ENCODE measurements at regions of chr2 and their contacts with region 1.

Region 1: DNA sequence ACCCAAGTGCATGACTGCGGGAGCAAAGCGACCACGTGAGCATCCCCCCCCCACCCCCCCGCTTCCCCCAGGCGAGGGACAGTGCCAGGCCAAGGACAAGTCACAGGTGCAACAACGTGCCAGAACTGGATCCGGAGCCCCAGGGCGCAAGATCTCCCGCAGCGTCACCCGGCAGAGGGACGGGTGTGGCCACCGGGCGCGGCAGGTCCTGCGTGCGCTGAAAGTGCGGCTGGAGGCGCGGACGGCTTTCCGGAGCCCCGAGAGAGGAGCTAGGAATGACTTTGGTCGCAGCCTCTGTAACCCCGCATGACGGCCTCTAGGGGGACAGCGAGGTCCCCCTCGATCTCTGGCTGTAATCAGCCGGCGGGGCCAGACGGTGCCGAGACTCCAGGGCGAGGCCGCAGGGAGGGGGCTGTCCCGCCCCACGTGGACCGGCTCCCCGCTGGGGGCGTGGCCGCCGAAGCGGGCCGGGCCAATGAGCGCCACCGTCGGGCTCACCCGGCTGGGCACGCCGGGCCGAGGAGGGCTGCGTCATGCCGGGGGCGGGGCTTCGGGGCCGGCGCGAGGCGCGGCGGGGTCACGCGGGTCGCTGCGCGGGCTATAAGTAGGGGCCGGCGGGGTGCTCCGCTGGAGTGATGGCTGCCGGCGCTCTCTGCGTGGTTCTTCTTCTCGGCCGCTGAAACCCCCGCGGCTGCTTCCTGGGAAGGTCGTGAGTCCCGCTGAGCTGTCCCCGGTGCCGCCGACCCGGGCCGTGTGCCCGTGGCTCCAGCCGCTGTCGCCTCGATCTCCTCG is at the start of gene SLC20A1:
- DNase-seq: peak; percentile 94
- ATAC-seq: peak; percentile 88
- H3K4me3 ChIP-seq: peak within 1 kb of the TSS; percentile 92 to 97 (median 94)
- H3K27ac ChIP-seq: peak within 1 kb of the TSS; percentile 92
- H3K4me1 ChIP-seq: peaks cover 83% of the 10 kb centered on the region
- H3K27me3 ChIP-seq: no peaks in the 10 kb centered on the region; a peak in 1 of 5 replicates
- CTCF ChIP-seq: peak; percentile 76
- EP300 ChIP-seq: peak; percentile 7 to 35; a peak in 3 of 4 replicates
- POLR2A ChIP-seq: peak; percentile 97 to 99
- RAD21 ChIP-seq: peak; percentile 86
- total RNA-seq, gene SLC20A1: 60.1 and 85.9 TPM in 2 replicates

Region 2: GRCh38 chr2:112601751-112602150 is 43.8 kb before region 1 on chr2:
- CTCF ChIA-PET with region 1: no interaction called
- POLR2A ChIA-PET with region 1: interaction called, 6 read pairs
- in situ Hi-C with region 1: no loop called
- intact Hi-C with region 1: loop called (anchors 1 kb)
- DNase-seq: no peak
- ATAC-seq: no peak
- H3K4me3 ChIP-seq: no peak overlapping the region
- H3K27ac ChIP-seq: no peak overlapping the region
- H3K4me1 ChIP-seq: peaks cover 20% of the 10 kb centered on the region
- H3K27me3 ChIP-seq: peaks cover 0 to 1% of the 10 kb centered on the region in 2 experiments; a peak in 1 of 5 replicates
- CTCF ChIP-seq: no peak
- EP300 ChIP-seq: no peak
- POLR2A ChIP-seq: no peak
- RAD21 ChIP-seq: no peak

Region 3: GRCh38 chr2:112656679-112657078 is 11.2 kb after region 1 on chr2:
- CTCF ChIA-PET with region 1: no interaction called
- POLR2A ChIA-PET with region 1: interaction called, 32 read pairs
- in situ Hi-C with region 1: no loop called
- intact Hi-C with region 1: no loop called
- DNase-seq: no peak
- ATAC-seq: no peak
- H3K4me3 ChIP-seq: no peak overlapping the region
- H3K27ac ChIP-seq: no peak overlapping the region
- H3K4me1 ChIP-seq: peaks cover 15% of the 10 kb centered on the region; the same call in 1 of the 2 replicates
- H3K27me3 ChIP-seq: no peaks in the 10 kb centered on the region
- CTCF ChIP-seq: no peak
- EP300 ChIP-seq: no peak
- POLR2A ChIP-seq: 0 out of 4 replicates have a peak, but pooled peaks of 1 of the 2 experiments have one; percentile 14
- RAD21 ChIP-seq: no peak

Region 4: GRCh38 chr2:112692496-112692911 is 47.0 kb after region 1 on chr2:
- CTCF ChIA-PET with region 1: interaction called, 3 read pairs
- POLR2A ChIA-PET with region 1: interaction called, 21 read pairs
- in situ Hi-C with region 1: no loop called
- intact Hi-C with region 1: loop called (anchors 1 kb)
- DNase-seq: peak; percentile 96
- ATAC-seq: peak; percentile 92
- H3K4me3 ChIP-seq: no peak overlapping the region
- H3K27ac ChIP-seq: no peak overlapping the region
- H3K4me1 ChIP-seq: peaks cover 52% of the 10 kb centered on the region
- H3K27me3 ChIP-seq: no peaks in the 10 kb centered on the region
- CTCF ChIP-seq: peak; percentile 33
- EP300 ChIP-seq: peak; percentile 48 to 55; a peak in 1 of 4 replicates
- POLR2A ChIP-seq: no peak
- RAD21 ChIP-seq: no peak

Region 5: DNA sequence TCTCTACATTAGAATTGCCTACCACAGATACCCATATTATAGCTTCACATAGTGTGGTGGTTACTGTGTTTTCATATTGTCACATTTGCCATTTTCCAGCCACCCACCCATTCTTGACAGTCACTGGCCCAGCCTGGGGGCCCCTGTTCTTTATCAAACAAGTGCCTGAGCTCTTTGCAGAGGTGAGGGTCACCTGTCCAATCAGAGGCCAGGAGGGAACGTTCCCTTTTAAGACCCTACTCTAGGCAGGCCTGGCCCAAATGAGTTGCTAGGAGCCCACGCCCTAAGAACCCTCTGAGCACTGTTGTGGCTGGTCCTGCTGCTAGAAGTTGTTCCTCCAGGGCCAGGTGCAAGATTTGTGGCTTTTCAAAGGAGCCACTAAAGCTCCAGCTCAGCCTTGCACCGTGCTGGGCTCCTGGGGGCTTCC is 270.7 kb after region 1 on chr2:
- CTCF ChIA-PET with region 1: no interaction called
- POLR2A ChIA-PET with region 1: no interaction called
- in situ Hi-C with region 1: no loop called
- intact Hi-C with region 1: no loop called
- DNase-seq: no peak
- ATAC-seq: no peak
- H3K4me3 ChIP-seq: no peak overlapping the region
- H3K27ac ChIP-seq: no peak overlapping the region
- H3K4me1 ChIP-seq: no peaks in the 10 kb centered on the region
- H3K27me3 ChIP-seq: peaks cover 0 to 40% of the 10 kb centered on the region in 2 experiments; a peak in 3 of 5 replicates
- CTCF ChIP-seq: no peak
- EP300 ChIP-seq: no peak
- POLR2A ChIP-seq: no peak
- RAD21 ChIP-seq: no peak

Region 6: DNA sequence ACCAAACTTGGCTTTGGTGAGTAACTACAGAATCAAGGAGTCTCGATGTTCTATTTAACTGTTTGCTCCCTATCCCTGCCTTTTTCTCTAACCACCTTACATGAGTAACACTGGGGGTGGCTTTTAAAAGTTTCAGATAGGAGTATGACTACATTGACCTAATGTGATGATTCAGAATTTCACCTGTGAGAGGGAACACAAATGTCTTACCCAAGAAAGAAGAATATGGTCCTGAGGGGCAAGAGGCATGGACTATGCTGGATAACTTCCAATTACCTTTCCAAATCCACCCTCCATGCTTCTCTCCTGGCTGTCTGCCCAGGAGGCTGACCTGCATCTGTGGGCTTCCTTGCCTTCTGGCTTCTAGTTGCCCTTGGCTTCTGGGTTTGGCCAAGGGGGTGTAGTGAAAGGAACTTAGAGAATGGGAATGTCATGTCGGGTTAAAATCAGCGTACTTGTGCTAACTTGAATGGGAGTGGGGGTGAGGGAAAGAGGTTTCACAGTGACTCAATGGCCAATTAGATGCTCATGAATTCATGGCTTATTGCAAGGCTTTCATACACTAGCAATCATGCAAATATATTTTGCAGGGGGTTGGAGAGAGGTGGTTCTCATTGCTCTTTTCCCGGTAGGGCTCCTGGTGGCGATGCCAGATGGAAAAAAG is 327.0 kb after region 1 on chr2:
- CTCF ChIA-PET with region 1: no interaction called
- POLR2A ChIA-PET with region 1: no interaction called
- in situ Hi-C with region 1: no loop called
- intact Hi-C with region 1: no loop called
- DNase-seq: no peak
- ATAC-seq: no peak
- H3K4me3 ChIP-seq: no peak overlapping the region
- H3K27ac ChIP-seq: no peak overlapping the region
- H3K4me1 ChIP-seq: no peaks in the 10 kb centered on the region
- H3K27me3 ChIP-seq: peaks cover 0 to 9% of the 10 kb centered on the region in 2 experiments; a peak in 2 of 5 replicates
- CTCF ChIP-seq: no peak
- EP300 ChIP-seq: no peak
- POLR2A ChIP-seq: no peak
- RAD21 ChIP-seq: no peak